PC-3 (cell line): ENCODE measurements at regions of chr1 and their contacts with region 1.

Region 1: DNA sequence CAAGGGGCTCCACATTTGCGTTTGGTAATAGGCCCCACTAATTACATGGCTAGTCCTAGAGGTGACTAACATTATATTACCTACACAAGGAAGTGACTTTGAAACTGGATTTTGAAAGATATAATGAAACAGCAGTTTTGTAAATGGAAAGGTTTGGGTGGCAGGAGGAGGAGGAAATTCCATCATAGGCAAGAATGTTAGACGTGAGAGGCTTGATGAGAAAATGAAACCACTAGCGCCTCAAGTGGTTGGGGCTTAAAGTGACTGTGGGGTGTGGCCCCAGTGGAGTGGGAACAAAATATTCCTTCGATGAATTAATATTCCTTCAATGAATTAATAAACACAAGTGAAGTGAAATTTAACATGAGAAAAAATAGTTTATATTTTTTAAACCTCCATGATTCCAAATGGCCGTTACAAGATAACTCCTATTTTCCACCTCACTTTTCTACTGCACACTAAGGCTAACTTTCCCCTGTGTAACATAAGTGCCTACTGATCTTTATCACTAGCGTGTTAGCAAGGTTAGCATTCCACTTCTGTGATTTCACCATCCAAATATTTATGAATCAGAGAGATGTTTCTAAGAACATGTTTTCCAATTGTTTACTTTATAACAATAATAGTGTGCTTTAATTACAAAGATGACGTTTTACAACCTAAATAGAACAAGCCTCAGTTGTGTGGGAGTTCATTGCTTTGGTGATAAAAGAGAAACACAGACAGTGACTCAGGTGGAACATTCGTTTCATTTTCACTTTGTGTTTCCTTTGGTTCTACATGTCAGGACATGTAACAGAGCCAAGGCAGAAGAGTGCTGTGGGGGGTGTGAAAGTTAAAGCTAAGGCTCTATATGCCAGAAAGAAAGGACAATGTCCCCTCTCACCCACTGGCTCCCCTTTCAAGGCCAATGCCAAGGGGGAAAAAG is 12.5 kb upstream of the ATF3 start:
- DNase-seq: peak; percentile 100
- ATAC-seq: peak; percentile 89
- H3K4me3 ChIP-seq: peak overlapping the region; percentile 46
- H3K27ac ChIP-seq: peak overlapping the region; percentile 80
- H3K4me1 ChIP-seq: peaks cover 45% of the 10 kb centered on the region
- H3K27me3 ChIP-seq: no peaks in the 10 kb centered on the region
- CTCF ChIP-seq: peak; percentile 99

Region 2: DNA sequence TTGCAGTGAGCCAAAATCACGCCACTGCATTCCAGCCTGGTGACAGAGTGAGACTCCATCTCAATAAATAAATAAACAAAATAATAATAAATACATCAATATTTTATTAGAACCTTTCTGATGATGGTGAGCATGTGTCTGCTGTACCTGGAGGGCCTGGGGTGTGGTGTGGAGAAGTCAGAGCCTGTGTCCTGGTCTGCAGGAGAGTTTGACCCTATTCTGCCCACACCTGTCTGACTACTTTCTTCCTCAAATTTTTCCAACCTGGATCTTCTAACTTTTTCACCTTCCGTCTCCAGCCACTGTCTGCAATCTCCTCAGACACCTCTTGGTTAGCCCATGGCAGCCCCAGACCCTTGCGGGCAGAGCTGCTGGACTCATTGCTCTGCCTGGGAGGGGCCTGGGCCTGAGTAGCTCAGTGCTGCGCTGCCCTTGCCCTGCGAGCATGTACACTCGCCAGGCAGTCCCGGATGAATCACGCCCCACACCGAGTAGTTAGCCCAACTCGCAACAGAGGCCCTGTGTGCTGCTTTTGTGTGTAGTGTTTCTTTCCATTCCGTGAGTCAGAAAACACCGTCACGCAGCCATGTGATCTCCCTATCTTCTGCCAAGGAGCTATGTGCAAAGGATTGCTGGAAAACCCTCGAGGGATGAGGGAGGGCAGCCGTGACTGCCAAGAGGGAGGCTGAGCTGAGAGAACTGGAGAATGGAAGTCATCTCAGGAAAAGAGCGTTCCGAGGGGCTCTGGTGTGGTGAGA is 126.2 kb before region 1 on chr1:
- CTCF ChIA-PET with region 1: interaction called, 3 read pairs
- POLR2A ChIA-PET with region 1: no interaction called
- intact Hi-C with region 1: loop called (anchors 1 kb)
- DNase-seq: peak; percentile 99
- ATAC-seq: peak; percentile 99
- H3K4me3 ChIP-seq: no peak overlapping the region; the same call in 1 of the 2 replicates
- H3K27ac ChIP-seq: peak overlapping the region; percentile 80
- H3K4me1 ChIP-seq: peaks cover 17% of the 10 kb centered on the region
- H3K27me3 ChIP-seq: no peaks in the 10 kb centered on the region
- CTCF ChIP-seq: no peak

Region 3: GRCh38 chr1:212482384-212483281 is 113.4 kb before region 1 on chr1:
- CTCF ChIA-PET with region 1: no interaction called
- POLR2A ChIA-PET with region 1: no interaction called
- intact Hi-C with region 1: loop called (anchors 1 kb)
- DNase-seq: peak; percentile 95
- ATAC-seq: peak; percentile 5
- H3K4me3 ChIP-seq: no peak overlapping the region
- H3K27ac ChIP-seq: peak overlapping the region; percentile 92
- H3K4me1 ChIP-seq: peaks cover 62% of the 10 kb centered on the region
- H3K27me3 ChIP-seq: no peaks in the 10 kb centered on the region
- CTCF ChIP-seq: no peak

Region 4: GRCh38 chr1:212488397-212489283 is 107.4 kb before region 1 on chr1:
- CTCF ChIA-PET with region 1: no interaction called
- POLR2A ChIA-PET with region 1: no interaction called
- intact Hi-C with region 1: loop called (anchors 1 kb)
- DNase-seq: peak; percentile 76
- ATAC-seq: no peak; the same call in 1 of the 2 replicates
- H3K4me3 ChIP-seq: no peak overlapping the region
- H3K27ac ChIP-seq: peak overlapping the region; percentile 92
- H3K4me1 ChIP-seq: peaks cover 49% of the 10 kb centered on the region
- H3K27me3 ChIP-seq: no peaks in the 10 kb centered on the region
- CTCF ChIP-seq: no peak

Region 5: DNA sequence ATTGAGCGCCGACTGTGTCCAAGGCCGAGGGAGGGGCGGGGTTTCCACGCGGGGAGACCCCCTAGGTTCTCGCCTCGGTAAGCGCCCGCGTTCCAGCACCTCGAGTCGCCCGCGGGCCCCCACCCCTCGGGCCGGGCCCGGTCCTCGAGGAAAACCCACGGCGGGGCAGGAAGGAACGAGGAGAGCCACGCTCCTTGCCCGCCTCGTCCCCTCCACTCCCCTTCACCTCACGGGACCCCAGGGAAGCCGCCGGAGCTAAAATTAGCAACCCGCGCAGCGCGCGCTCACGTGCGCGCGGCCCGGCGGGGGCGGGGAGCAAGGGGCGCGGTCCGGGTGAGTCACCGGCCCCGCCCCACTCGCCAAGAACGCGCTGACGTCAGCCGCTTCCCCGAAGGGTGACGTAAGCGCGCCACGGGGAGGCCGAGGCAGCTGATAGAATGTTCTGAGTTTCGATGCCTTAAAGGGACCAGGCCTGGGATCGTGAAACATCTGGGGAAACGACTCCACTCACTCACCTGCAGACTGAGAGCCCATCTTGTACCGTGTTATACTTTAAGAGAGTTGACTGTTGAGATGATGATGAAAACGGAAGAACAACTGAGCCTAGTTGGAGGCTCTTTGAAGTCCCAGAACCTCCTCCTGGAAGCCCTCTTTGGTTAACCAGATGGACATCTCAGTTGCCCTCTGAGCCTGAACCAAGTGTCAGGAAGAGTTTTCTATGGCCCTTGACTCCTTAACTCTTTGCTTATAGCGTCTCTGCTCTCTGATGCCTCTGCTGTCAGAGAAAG is 37.2 kb before region 1 on chr1:
- CTCF ChIA-PET with region 1: interaction called, 3 read pairs
- POLR2A ChIA-PET with region 1: interaction called, 3 read pairs
- intact Hi-C with region 1: loop called (anchors 1 kb)
- DNase-seq: peak; percentile 99
- ATAC-seq: peak; percentile 69
- H3K4me3 ChIP-seq: peak overlapping the region; percentile 76
- H3K27ac ChIP-seq: peak overlapping the region; percentile 66
- H3K4me1 ChIP-seq: peaks cover 37% of the 10 kb centered on the region
- H3K27me3 ChIP-seq: no peaks in the 10 kb centered on the region
- CTCF ChIP-seq: peak; percentile 35; the same call in 1 of the 2 replicates

Region 6: DNA sequence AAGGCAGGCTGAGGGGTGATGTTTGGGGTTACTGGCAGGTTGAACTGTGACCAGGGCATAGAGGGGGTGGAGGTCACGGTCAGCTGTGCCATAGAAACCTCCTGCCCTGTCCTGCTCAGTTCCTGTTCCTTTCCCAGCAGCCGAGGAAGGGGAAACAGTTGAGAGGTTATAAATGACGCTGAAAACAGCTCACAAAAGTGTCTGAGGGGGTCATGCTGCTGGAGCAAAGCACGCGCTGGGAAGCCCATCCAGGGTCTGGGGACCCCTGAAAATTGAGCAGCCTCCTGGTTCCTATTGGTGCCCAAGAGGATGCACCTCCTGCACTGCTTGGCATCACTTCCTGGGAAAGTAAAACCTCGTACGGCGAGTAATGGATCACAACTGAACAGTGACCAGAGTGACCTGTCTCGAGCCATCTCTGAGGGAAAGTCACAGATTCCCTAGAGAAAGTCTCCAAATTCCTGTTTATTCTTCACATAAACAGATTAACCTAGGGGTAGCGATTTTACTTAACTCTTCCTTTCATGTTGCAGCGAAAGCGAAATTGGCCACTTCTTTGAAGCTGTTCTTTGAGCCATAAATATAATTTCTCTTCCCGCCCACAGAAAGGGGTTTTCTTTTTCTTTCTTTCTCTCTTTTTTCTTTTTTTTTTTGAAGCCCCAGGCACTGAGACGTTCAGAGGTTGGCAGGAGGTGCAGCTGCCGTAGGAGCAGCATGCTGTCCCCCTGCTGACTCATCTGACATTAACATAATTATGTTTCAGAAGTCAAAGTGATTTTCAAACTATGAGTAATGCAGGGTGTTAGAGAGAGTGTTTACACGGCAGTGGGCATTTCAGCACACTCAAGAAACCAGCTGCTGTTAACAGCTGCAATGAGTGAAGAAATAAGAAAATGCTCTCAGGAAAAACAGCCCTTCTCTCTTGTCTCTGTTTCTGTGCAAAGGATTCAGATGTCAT is 29.2 kb before region 1 on chr1:
- CTCF ChIA-PET with region 1: no interaction called
- POLR2A ChIA-PET with region 1: no interaction called
- intact Hi-C with region 1: loop called (anchors 2 kb)
- DNase-seq: peak; percentile 81
- ATAC-seq: peak; percentile 91
- H3K4me3 ChIP-seq: peak overlapping the region; percentile 67
- H3K27ac ChIP-seq: peak overlapping the region; percentile 30
- H3K4me1 ChIP-seq: peaks cover 21% of the 10 kb centered on the region
- H3K27me3 ChIP-seq: no peaks in the 10 kb centered on the region
- CTCF ChIP-seq: no peak